ENCODE measurements at regions of chr3 and their contacts with region 1.

Region 1: DNA sequence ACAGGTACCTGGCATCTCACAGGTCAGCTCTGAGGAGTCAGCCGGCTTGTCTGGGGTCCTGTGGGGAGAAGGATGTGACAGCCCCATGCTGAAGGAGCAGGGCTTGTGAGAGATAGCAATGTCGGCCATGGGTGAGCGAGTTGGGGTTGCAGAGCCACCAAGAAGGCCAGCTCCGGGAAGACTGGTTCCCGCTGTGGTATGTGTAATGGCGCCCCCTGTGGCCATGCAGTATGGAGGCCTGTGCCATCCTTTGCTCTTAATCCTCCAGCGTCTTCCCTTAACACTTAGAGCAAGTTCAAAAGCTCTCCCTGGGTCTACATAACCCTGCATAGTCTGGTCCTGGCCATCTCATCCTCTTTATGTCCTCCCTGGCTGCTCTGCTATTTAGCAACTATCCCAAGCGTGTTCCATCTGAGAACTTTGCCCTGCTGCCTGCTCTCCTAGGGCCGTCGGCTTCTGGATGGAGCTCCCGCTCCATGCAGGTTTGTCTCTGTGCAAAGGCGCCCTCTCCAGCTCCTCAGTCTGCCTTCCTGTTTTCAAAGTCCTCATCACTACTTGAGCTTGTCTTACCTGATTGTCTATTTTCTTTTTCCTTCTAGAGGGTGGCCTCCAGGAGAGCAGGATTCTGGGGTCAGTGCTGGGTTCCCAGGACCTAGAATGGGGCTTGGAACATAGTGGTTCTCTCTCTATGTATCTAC is 40.8 kb upstream of the IQCF6 start:
- DNase-seq: peak; percentile 82
- ATAC-seq: peak; percentile 99
- H3K4me3 Mint-ChIP-seq: no peak overlapping the region
- H3K27ac Mint-ChIP-seq: no peak overlapping the region
- H3K4me1 Mint-ChIP-seq: 0 out of 2 replicates have a peak, but pooled peaks cover 4% of the 10 kb centered on the region
- H3K27me3 Mint-ChIP-seq: peaks cover 13% of the 10 kb centered on the region
- CTCF ChIP-seq: peak; percentile 76

Region 2: GRCh38 chr3:51706788-51707731 is 112.8 kb before region 1 on chr3 and contains the start of gene GRM2:
- CTCF ChIA-PET with region 1: interaction called, 31 read pairs
- POLR2A ChIA-PET with region 1: no interaction called
- DNase-seq: peak; percentile 93
- ATAC-seq: peak; percentile 76
- H3K4me3 Mint-ChIP-seq: peak within 1 kb of the TSS; percentile 92
- H3K27ac Mint-ChIP-seq: no peak within 1 kb of the TSS
- H3K4me1 Mint-ChIP-seq: peaks cover 29% of the 10 kb centered on the region
- H3K27me3 Mint-ChIP-seq: peaks cover 28% of the 10 kb centered on the region
- CTCF ChIP-seq: no peak
- total RNA-seq, gene GRM2: 2.8 to 4.1 TPM (median 3.7 TPM) in 3 replicates

Region 3: DNA sequence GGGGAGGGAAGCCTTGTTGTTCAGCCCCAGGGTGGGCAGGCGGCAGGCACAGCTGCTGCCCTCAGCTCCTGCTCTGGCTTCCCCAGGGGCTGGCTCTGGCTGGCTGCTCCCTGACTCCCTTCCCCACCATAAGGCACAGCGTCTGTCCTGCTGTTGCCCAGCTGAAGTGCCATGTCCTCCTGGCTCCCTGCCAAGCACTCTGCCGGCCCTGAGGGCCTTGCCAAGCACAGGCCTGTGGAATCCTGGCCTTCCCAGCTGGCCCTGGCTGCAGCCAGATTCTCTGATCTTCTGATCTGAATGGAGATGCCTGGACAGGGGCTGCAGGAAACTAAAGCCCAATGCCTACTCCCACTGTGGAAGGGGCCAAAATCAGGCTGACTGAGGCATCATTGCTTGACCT is 41.9 kb before region 1 on chr3:
- CTCF ChIA-PET with region 1: interaction called, 11 read pairs
- POLR2A ChIA-PET with region 1: no interaction called
- DNase-seq: no peak
- ATAC-seq: no peak
- H3K4me3 Mint-ChIP-seq: no peak overlapping the region
- H3K27ac Mint-ChIP-seq: no peak overlapping the region
- H3K4me1 Mint-ChIP-seq: peaks cover 11% of the 10 kb centered on the region
- H3K27me3 Mint-ChIP-seq: no peaks in the 10 kb centered on the region; the same call in 1 of the 2 replicates
- CTCF ChIP-seq: no peak

Region 4: GRCh38 chr3:51799879-51800749 is 19.7 kb before region 1 on chr3:
- CTCF ChIA-PET with region 1: interaction called, 63 read pairs
- POLR2A ChIA-PET with region 1: no interaction called
- DNase-seq: no peak
- ATAC-seq: no peak
- H3K4me3 Mint-ChIP-seq: no peak overlapping the region
- H3K27ac Mint-ChIP-seq: peak overlapping the region; percentile 58; the same call in 1 of the 2 replicates
- H3K4me1 Mint-ChIP-seq: peaks cover 70% of the 10 kb centered on the region
- H3K27me3 Mint-ChIP-seq: no peaks in the 10 kb centered on the region
- CTCF ChIP-seq: peak; percentile 73

Region 5: DNA sequence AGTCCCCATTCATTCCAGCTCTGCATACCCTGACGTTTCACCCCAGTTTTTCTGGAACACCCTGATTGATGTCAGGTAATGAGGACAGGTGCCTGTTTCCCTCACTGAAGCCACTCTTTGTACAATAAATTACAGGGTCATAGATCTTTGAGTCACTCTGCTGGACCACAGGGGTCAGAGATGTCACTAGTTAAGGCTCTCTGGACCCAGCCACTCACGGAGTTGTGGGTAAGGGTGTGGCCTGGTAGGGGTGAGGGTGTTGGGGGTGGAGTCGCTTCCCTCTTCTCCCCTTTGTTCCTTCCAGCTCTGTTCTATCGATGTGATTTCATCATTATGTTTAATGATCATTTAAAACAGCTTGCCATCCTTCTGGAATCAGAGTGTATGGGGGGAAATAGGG is 55.0 kb after region 1 on chr3:
- CTCF ChIA-PET with region 1: interaction called, 11 read pairs
- POLR2A ChIA-PET with region 1: no interaction called
- DNase-seq: no peak
- ATAC-seq: no peak
- H3K4me3 Mint-ChIP-seq: no peak overlapping the region
- H3K27ac Mint-ChIP-seq: no peak overlapping the region
- H3K4me1 Mint-ChIP-seq: no peaks in the 10 kb centered on the region
- H3K27me3 Mint-ChIP-seq: no peaks in the 10 kb centered on the region; the same call in 1 of the 2 replicates
- CTCF ChIP-seq: no peak

Region 6: GRCh38 chr3:51941798-51942602 is 122.1 kb after region 1 on chr3 and contains the starts of genes PARP3 and RRP9:
- CTCF ChIA-PET with region 1: interaction called, 13 read pairs
- POLR2A ChIA-PET with region 1: no interaction called
- DNase-seq: peak; percentile 100
- ATAC-seq: peak; percentile 96
- H3K4me3 Mint-ChIP-seq: peak within 1 kb of the TSS; percentile 91
- H3K27ac Mint-ChIP-seq: no peak within 1 kb of the TSS
- H3K4me1 Mint-ChIP-seq: peaks cover 17% of the 10 kb centered on the region
- H3K27me3 Mint-ChIP-seq: no peaks in the 10 kb centered on the region; the same call in 1 of the 2 replicates
- CTCF ChIP-seq: peak; percentile 99
- total RNA-seq, gene PARP3: 2.8 to 2.9 TPM (median 2.8 TPM) in 3 replicates
- total RNA-seq, gene RRP9: 47.0 to 49.9 TPM (median 49.4 TPM) in 3 replicates

Region 7: GRCh38 chr3:52022323-52023100 is 202.7 kb after region 1 on chr3:
- CTCF ChIA-PET with region 1: no interaction called
- POLR2A ChIA-PET with region 1: no interaction called
- DNase-seq: no peak
- ATAC-seq: peak; percentile 84
- H3K4me3 Mint-ChIP-seq: no peak overlapping the region
- H3K27ac Mint-ChIP-seq: no peak overlapping the region
- H3K4me1 Mint-ChIP-seq: peaks cover 9% of the 10 kb centered on the region
- H3K27me3 Mint-ChIP-seq: no peaks in the 10 kb centered on the region
- CTCF ChIP-seq: no peak

Measured in WTC11 (cell line).